ENCODE measurements at regions of chr7 and their contacts with region 1.

Region 1: GRCh38 chr7:101287032-101287431 is 34.6 kb downstream of the IFT22 start:
- DNase-seq: no peak
- H3K4me3 ChIP-seq: no peak overlapping the region
- H3K27ac ChIP-seq: no peak overlapping the region
- H3K27me3 ChIP-seq: peaks cover 17% of the 10 kb centered on the region
- CTCF ChIP-seq: no peak

Region 2: DNA sequence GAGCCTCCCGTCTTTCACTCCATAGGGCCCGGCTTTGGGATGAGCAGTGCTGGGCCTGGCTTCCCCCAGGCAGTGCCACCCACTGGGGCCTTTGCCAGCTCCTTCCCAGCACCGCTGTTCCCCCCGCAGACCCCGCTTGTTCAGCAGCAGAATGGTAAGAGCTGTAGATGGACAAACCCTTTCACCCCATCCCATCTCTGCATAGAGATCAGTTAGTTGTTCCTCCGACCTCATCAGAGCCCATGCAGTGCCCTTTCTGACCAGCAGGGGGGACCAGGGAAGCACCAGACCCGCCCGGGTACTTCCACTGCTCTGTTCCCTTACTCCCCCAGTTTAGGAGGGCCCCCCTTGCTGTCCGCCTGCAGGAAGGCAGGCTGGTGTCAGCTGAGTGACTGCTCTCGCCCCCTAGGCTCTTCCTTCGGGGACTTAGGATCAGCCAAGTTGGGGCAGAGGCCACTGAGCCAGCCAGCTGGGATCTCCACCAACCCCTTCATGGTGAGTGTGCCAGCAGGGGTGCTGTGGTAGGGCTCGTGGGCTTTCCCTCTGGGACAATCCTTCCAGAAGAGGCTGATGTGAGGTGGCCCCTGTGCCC is 723.1 kb before region 1 on chr7:
- CTCF ChIA-PET with region 1: no interaction called
- POLR2A ChIA-PET with region 1: no interaction called
- DNase-seq: no peak
- H3K4me3 ChIP-seq: no peak overlapping the region
- H3K27ac ChIP-seq: no peak overlapping the region
- H3K27me3 ChIP-seq: no peaks in the 10 kb centered on the region
- CTCF ChIP-seq: peak; percentile 97

Region 3: GRCh38 chr7:101217388-101218235 is 69.4 kb before region 1 on chr7 and contains the starts of genes PLOD3 and ZNHIT1:
- CTCF ChIA-PET with region 1: interaction called, 10 read pairs
- POLR2A ChIA-PET with region 1: no interaction called
- DNase-seq: peak; percentile 95
- H3K4me3 ChIP-seq: peak within 1 kb of the TSS; percentile 92
- H3K27ac ChIP-seq: peak within 1 kb of the TSS; percentile 96
- H3K27me3 ChIP-seq: no peaks in the 10 kb centered on the region
- CTCF ChIP-seq: 0 out of 2 replicates have a peak, but pooled peaks have one; percentile 11
- polyA plus RNA-seq, gene PLOD3: 60.6 and 86.9 TPM in 2 replicates
- polyA plus RNA-seq, gene ZNHIT1: 36.0 and 46.2 TPM in 2 replicates

Region 4: DNA sequence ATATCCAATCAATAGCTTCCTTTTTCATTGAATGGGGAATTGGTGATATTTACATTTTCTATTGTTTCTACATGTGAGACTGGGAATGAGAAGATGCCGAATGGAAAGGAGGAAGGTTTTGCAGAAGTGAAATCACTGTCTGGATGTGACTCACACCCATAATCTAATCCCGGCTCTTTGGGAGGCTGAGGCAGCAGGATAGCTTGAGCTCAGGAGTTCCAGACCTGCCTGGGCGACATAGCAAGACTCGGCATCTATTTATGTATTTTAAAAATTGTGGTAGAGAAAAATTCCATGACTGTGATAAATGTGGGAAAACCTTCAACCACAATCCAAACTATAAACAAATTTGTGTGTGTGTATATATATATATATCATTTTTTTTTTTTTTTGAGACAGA is 31.2 kb before region 1 on chr7:
- CTCF ChIA-PET with region 1: interaction called, 11 read pairs
- POLR2A ChIA-PET with region 1: interaction called, 3 read pairs
- DNase-seq: no peak
- H3K4me3 ChIP-seq: no peak overlapping the region
- H3K27ac ChIP-seq: no peak overlapping the region
- H3K27me3 ChIP-seq: peaks cover 13% of the 10 kb centered on the region
- CTCF ChIP-seq: no peak

Region 5: GRCh38 chr7:101273206-101273605 is 13.8 kb before region 1 on chr7:
- CTCF ChIA-PET with region 1: interaction called, 14 read pairs
- POLR2A ChIA-PET with region 1: no interaction called
- DNase-seq: no peak
- H3K4me3 ChIP-seq: no peak overlapping the region
- H3K27ac ChIP-seq: no peak overlapping the region
- H3K27me3 ChIP-seq: peaks cover 23% of the 10 kb centered on the region
- CTCF ChIP-seq: no peak

Measured in AG04450 (cell line).